Calu3 (cell line): ENCODE measurements at regions of chr12 and their contacts with region 1.

Region 1: GRCh38 chr12:101414533-101415119 is 7.1 kb upstream of the ARL1 start:
- DNase-seq: peak; percentile 71
- H3K4me3 Mint-ChIP-seq: no peak overlapping the region
- H3K27ac Mint-ChIP-seq: no peak overlapping the region
- H3K4me1 Mint-ChIP-seq: no peaks in the 10 kb centered on the region
- H3K27me3 Mint-ChIP-seq: peaks cover 9% of the 10 kb centered on the region
- CTCF ChIP-seq: peak; percentile 45

Region 2: GRCh38 chr12:101323255-101323654 is 91.4 kb before region 1 on chr12:
- CTCF ChIA-PET with region 1: no interaction called
- intact Hi-C with region 1: no loop called
- DNase-seq: no peak
- H3K4me3 Mint-ChIP-seq: no peak overlapping the region
- H3K27ac Mint-ChIP-seq: no peak overlapping the region
- H3K4me1 Mint-ChIP-seq: no peaks in the 10 kb centered on the region
- H3K27me3 Mint-ChIP-seq: no peaks in the 10 kb centered on the region
- CTCF ChIP-seq: no peak

Region 3: GRCh38 chr12:101336437-101336836 is 78.2 kb before region 1 on chr12:
- CTCF ChIA-PET with region 1: no interaction called
- intact Hi-C with region 1: no loop called
- DNase-seq: no peak
- H3K4me3 Mint-ChIP-seq: no peak overlapping the region
- H3K27ac Mint-ChIP-seq: no peak overlapping the region
- H3K4me1 Mint-ChIP-seq: no peaks in the 10 kb centered on the region
- H3K27me3 Mint-ChIP-seq: no peaks in the 10 kb centered on the region
- CTCF ChIP-seq: no peak

Region 4: DNA sequence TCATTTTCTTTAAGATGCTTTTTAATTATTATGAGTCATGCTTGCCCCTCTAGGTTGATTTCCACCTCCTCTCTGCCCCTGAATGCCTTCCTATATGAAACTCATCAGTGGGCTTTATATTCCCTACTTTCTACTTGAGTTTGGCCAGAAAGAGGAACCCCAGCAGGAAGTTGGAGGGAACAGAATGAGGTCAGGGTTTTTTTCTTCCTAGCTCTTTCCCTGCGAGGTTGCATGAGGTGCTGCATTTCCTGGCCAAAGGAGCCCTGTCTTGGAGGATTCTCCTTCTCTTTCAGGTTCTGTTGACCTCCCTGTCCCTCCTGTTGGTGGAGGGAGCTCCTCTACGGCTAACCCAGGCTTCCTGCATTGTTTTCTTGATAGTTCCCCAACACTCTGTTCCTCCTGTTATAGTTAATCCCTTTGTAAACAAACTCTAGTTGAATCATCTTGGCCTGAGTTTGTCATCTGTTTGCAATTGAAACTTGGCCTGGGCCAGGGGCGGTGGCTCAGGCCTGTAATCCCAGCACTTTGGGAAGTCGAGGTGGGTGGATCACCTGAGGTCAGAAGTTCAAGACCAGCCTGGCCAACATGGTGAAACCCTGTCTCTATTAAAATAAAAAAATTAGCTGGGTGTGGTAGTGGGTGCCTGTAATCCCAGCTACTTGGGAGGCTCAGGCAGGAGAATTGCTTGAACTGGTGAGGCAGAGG is 45.2 kb after region 1 on chr12:
- CTCF ChIA-PET with region 1: no interaction called
- intact Hi-C with region 1: loop called (anchors 2 kb)
- DNase-seq: peak; percentile 68
- H3K4me3 Mint-ChIP-seq: no peak overlapping the region
- H3K27ac Mint-ChIP-seq: peak overlapping the region; percentile 75
- H3K4me1 Mint-ChIP-seq: peaks cover 14% of the 10 kb centered on the region
- H3K27me3 Mint-ChIP-seq: no peaks in the 10 kb centered on the region
- CTCF ChIP-seq: no peak

Region 5: GRCh38 chr12:101490286-101490920 is 75.8 kb after region 1 on chr12:
- CTCF ChIA-PET with region 1: no interaction called
- intact Hi-C with region 1: loop called (anchors 1 kb)
- DNase-seq: peak; percentile 60
- H3K4me3 Mint-ChIP-seq: no peak overlapping the region
- H3K27ac Mint-ChIP-seq: no peak overlapping the region
- H3K4me1 Mint-ChIP-seq: no peaks in the 10 kb centered on the region
- H3K27me3 Mint-ChIP-seq: peaks cover 16% of the 10 kb centered on the region
- CTCF ChIP-seq: peak; percentile 34

Region 6: DNA sequence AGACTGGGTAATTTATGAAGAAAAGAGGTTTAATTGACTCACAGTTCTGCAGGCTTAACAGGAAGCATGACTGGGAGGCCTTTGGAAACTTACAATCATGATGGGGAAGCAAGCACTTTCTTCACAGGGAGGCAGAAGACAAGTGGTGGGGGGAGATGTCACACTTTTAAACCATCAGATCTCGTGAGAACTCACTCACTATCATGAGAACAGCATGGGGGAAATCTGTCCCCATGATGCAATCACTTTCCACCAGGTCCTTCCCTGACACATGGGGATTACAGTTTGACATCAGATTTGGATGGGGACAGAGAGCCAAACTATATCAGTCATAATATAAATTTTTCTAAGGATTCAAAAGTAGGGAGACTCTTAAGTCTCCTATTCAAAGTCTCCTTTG is 106.5 kb after region 1 on chr12:
- CTCF ChIA-PET with region 1: no interaction called
- intact Hi-C with region 1: no loop called
- DNase-seq: no peak
- H3K4me3 Mint-ChIP-seq: no peak overlapping the region
- H3K27ac Mint-ChIP-seq: no peak overlapping the region
- H3K4me1 Mint-ChIP-seq: peaks cover 9% of the 10 kb centered on the region
- H3K27me3 Mint-ChIP-seq: peaks cover 17% of the 10 kb centered on the region
- CTCF ChIP-seq: no peak

Region 7: DNA sequence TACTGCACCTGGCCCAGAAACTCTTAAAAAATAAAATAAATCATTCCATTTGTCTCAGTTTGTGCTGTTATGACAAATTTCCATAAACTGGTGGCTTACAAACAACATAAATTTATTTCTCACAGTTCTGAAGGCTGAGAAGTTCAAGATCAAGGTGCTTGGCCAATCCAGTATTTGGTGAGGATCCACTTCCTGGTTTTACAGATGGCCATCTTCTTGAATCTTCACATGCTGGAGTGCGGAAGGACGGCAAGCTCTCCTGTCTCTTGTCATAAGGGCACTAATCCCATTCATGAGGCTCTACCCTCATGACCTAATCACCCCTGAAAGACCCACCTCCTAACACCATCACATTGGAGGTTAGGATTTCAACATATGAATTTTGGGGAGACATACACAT is 150.3 kb after region 1 on chr12:
- CTCF ChIA-PET with region 1: interaction called, 3 read pairs
- intact Hi-C with region 1: loop called (anchors 10 kb)
- DNase-seq: no peak
- H3K4me3 Mint-ChIP-seq: no peak overlapping the region
- H3K27ac Mint-ChIP-seq: no peak overlapping the region
- H3K4me1 Mint-ChIP-seq: peaks cover 9% of the 10 kb centered on the region
- H3K27me3 Mint-ChIP-seq: no peaks in the 10 kb centered on the region
- CTCF ChIP-seq: no peak

Region 8: DNA sequence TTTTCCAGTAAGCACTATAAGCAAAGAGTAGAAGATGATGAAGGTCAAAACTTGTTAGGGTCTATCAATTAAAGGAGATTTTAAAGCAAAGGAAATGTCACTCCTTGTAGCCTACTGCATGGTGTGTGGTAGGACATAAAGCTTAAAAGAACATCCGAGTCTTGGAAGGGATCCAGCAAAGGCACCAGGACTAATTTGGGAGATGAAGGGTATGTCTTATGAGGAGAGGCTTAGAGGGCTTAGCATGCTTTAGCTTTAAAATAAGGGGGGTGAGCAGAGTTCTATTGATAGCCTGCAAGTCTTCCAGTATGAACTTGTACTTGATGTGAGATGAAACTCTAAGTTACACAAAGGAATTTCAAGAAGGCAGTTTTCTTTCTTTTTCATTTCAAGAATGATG is 168.3 kb after region 1 on chr12:
- CTCF ChIA-PET with region 1: no interaction called
- intact Hi-C with region 1: no loop called
- DNase-seq: no peak
- H3K4me3 Mint-ChIP-seq: no peak overlapping the region
- H3K27ac Mint-ChIP-seq: no peak overlapping the region
- H3K4me1 Mint-ChIP-seq: no peaks in the 10 kb centered on the region
- H3K27me3 Mint-ChIP-seq: no peaks in the 10 kb centered on the region
- CTCF ChIP-seq: no peak

Region 9: DNA sequence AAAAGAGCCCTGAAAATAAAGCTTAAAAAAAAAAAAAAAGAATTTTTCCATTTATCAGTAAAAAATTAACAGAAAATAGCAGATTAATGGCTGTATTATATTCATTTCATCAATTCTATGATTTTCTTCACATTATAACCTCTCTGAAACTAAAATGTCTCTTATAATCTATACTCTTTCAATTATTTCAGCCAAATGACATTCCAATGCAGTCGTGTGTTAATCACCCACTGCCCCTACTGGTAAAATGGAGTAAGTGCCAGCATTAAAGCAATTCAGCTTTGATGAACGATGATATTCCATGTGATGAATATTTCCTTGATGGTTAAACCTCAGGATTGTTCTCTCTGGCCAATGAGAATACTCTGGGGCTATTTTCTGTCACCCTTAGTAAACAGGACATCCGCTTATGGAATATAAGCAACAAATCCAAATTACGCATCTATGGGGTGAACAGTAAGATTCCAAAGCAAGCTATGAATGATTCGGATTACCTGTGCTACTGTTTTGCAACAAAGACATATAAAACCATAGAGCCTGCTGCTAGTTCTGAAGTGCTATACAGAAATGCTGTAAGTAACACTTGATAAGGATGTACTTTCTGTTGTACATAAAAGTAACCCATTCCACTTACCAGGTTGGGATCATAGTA is 344.9 kb after region 1 on chr12:
- CTCF ChIA-PET with region 1: interaction called, 7 read pairs
- intact Hi-C with region 1: loop called (anchors 1 kb)
- DNase-seq: peak; percentile 24
- H3K4me3 Mint-ChIP-seq: no peak overlapping the region
- H3K27ac Mint-ChIP-seq: no peak overlapping the region
- H3K4me1 Mint-ChIP-seq: peaks cover 6% of the 10 kb centered on the region
- H3K27me3 Mint-ChIP-seq: no peaks in the 10 kb centered on the region
- CTCF ChIP-seq: peak; percentile 46

Region 10: DNA sequence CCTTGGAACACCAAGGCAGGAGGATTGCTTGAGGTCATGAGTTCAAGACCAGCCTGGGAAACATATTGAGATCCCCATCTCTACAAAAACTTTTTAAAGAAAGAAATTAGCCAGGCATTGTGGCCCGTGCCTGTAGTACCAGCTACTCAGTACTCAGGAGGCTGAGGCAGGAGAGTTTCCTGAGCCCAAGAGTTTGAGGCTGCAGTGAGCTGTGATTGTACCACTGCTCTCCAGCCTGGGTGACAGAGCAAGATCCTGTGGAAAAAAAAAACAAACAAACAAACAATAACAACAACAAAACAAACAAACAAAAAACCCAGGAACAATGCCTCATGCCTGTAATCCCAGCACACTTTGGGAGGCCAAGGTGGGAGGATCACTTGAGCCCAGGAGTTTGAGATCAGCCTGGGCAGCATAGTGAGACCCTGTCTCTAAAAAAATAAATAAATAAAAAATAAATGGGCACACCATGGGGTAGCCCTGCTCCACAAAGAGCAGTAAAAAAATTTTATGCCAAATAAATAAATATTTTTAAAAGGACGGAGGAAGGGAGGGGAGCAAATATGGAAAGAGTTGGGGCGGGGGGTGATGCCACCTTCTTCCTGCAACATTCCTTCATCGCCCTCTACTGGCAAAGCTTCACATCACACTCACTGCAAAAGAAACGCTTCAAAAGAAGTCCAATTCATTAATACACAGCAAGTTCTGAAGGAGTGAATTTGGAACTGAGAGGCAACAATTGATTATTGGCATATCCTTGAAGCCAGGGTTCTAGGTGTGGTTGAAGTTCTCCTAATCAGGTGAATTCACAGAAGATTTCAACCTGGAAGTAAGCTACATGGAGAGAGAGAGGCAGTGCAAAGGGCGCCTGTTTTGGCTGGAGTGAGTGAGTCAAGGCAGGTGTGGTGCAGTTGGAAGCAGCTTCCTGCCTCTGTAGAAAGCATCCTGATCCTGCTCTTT is 425.0 kb after region 1 on chr12:
- CTCF ChIA-PET with region 1: interaction called, 4 read pairs
- intact Hi-C with region 1: loop called (anchors 1 kb)
- DNase-seq: peak; percentile 74
- H3K4me3 Mint-ChIP-seq: no peak overlapping the region
- H3K27ac Mint-ChIP-seq: no peak overlapping the region
- H3K4me1 Mint-ChIP-seq: no peaks in the 10 kb centered on the region
- H3K27me3 Mint-ChIP-seq: no peaks in the 10 kb centered on the region
- CTCF ChIP-seq: peak; percentile 86